Vagina (tissue), 2 donors: ENCODE measurements at regions of chr5 and their contacts with region 1.

Region 1: GRCh38 chr5:80790698-80791097 is 135.9 kb upstream of the DHFR start:
- DNase-seq: no peak
- H3K4me3 ChIP-seq: no peak overlapping the region
- H3K27ac ChIP-seq: no peak overlapping the region
- H3K4me1 ChIP-seq: no peaks in the 10 kb centered on the region
- H3K27me3 ChIP-seq: no peaks in the 10 kb centered on the region
- CTCF ChIP-seq: no peak
- POLR2A ChIP-seq: no peak

Region 2: DNA sequence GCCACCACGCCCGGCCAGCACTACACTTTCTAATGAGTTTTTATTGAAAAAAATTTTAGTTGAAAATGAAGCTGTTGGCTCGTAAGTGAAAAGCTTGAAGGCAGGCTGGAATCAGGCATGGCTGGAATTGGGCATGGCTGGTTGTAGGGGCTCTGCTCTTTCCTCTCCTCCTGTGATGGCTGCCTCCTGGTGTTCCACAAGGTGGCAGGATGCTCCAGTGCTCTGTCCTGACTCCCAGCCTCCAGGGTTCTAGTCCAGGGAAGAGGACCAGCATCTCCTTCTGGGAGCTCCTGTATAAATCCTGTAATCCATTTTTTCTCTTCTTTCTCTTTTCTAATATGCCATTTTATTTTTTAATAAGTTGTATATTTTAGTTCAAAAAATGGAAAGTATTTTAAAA is 78.8 kb before region 1 on chr5:
- intact Hi-C with region 1: no loop called
- DNase-seq: no peak
- H3K4me3 ChIP-seq: no peak overlapping the region
- H3K27ac ChIP-seq: no peak overlapping the region
- H3K4me1 ChIP-seq: peaks cover 8% of the 10 kb centered on the region
- H3K27me3 ChIP-seq: no peaks in the 10 kb centered on the region
- CTCF ChIP-seq: no peak
- POLR2A ChIP-seq: no peak

Region 3: DNA sequence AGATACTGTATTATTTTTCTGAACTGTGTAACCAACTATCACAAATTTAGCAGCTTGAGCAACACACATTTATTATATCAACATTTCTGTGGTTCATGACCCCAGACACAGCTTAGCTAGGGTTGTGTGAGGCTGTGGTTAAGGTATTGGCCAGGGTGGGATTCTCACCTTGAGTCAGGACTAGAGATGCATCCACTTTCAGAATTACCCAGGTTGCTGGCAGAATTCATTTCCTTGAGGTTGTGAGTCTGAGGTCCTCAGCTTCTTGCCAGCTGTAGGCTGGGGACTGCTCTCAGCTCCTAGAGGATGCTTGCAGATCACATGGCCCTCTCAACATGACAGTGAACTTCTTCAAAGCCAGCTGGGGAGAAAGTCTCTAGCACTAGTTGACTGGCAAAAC is 47.0 kb after region 1 on chr5:
- intact Hi-C with region 1: loop called (anchors 1 kb)
- DNase-seq: no peak
- H3K4me3 ChIP-seq: no peak overlapping the region
- H3K27ac ChIP-seq: no peak overlapping the region
- H3K4me1 ChIP-seq: no peaks in the 10 kb centered on the region
- H3K27me3 ChIP-seq: no peaks in the 10 kb centered on the region
- CTCF ChIP-seq: no peak
- POLR2A ChIP-seq: no peak